GM12878 (cell line): ENCODE measurements at regions of chrX and their contacts with region 1.

Region 1: GRCh38 chrX:24054182-24055042 is at the start of gene EIF2S3:
- DNase-seq: peak; percentile 88
- ATAC-seq: peak; percentile 91
- H3K4me3 ChIP-seq: peak within 1 kb of the TSS; percentile 72
- H3K27ac ChIP-seq: peak within 1 kb of the TSS; percentile 97
- H3K4me1 ChIP-seq: no peaks in the 10 kb centered on the region
- H3K27me3 ChIP-seq: no peaks in the 10 kb centered on the region
- CTCF ChIP-seq: peak; percentile 64 to 80 (median 74)
- EP300 ChIP-seq: peak; percentile 34 to 66; a peak in 3 of 4 replicates
- POLR2A ChIP-seq: peak; percentile 99
- RAD21 ChIP-seq: peak; percentile 41
- polyA plus RNA-seq, gene EIF2S3: 120 to 135 TPM

Region 2: GRCh38 chrX:23782863-23783568 is 271.4 kb before region 1 on chrX and contains the start of gene SAT1:
- CTCF ChIA-PET with region 1: interaction called, 11 read pairs
- POLR2A ChIA-PET with region 1: interaction called, 4 read pairs
- RAD21 ChIA-PET with region 1: interaction called, 22 read pairs
- SMC1A ChIA-PET with region 1: interaction called, 3 read pairs
- in situ Hi-C with region 1: no loop called
- intact Hi-C with region 1: loop called (anchors 10 kb)
- DNase-seq: peak; percentile 65
- ATAC-seq: peak; percentile 88
- H3K4me3 ChIP-seq: peak within 1 kb of the TSS; percentile 75
- H3K27ac ChIP-seq: peak within 1 kb of the TSS; percentile 82
- H3K4me1 ChIP-seq: no peaks in the 10 kb centered on the region
- H3K27me3 ChIP-seq: no peaks in the 10 kb centered on the region
- CTCF ChIP-seq: peak; percentile 64 to 74 (median 65)
- EP300 ChIP-seq: no peak
- POLR2A ChIP-seq: peak; percentile 100
- RAD21 ChIP-seq: peak; percentile 65
- polyA plus RNA-seq, gene SAT1: 155 to 162 TPM

Region 3: GRCh38 chrX:23871905-23872546 is 182.4 kb before region 1 on chrX:
- CTCF ChIA-PET with region 1: no interaction called
- POLR2A ChIA-PET with region 1: no interaction called
- RAD21 ChIA-PET with region 1: no interaction called
- SMC1A ChIA-PET with region 1: no interaction called
- in situ Hi-C with region 1: no loop called
- intact Hi-C with region 1: no loop called
- DNase-seq: no peak
- ATAC-seq: no peak
- H3K4me3 ChIP-seq: no peak overlapping the region
- H3K27ac ChIP-seq: no peak overlapping the region
- H3K4me1 ChIP-seq: no peaks in the 10 kb centered on the region
- H3K27me3 ChIP-seq: no peaks in the 10 kb centered on the region
- CTCF ChIP-seq: no peak
- EP300 ChIP-seq: no peak
- POLR2A ChIP-seq: no peak
- RAD21 ChIP-seq: no peak

Region 4: GRCh38 chrX:23907498-23908218 is 146.8 kb before region 1 on chrX and contains the starts of genes APOO and CXorf58:
- CTCF ChIA-PET with region 1: interaction called, 39 read pairs
- POLR2A ChIA-PET with region 1: interaction called, 31 read pairs
- RAD21 ChIA-PET with region 1: interaction called, 44 read pairs
- SMC1A ChIA-PET with region 1: interaction called, 37 read pairs
- in situ Hi-C with region 1: no loop called
- intact Hi-C with region 1: loop called (anchors 1 kb)
- DNase-seq: peak; percentile 54
- ATAC-seq: peak; percentile 95
- H3K4me3 ChIP-seq: peak within 1 kb of the TSS; percentile 78
- H3K27ac ChIP-seq: peak within 1 kb of the TSS; percentile 73
- H3K4me1 ChIP-seq: no peaks in the 10 kb centered on the region; the same call in 1 of the 2 replicates
- H3K27me3 ChIP-seq: no peaks in the 10 kb centered on the region
- CTCF ChIP-seq: peak; percentile 73 to 83 (median 76)
- EP300 ChIP-seq: no peak; a peak in 1 of 4 replicates
- POLR2A ChIP-seq: peak; percentile 81
- RAD21 ChIP-seq: peak; percentile 51
- polyA plus RNA-seq, gene APOO: 41.8 to 42.9 TPM
- polyA plus RNA-seq, gene CXorf58: not detected

Region 5: DNA sequence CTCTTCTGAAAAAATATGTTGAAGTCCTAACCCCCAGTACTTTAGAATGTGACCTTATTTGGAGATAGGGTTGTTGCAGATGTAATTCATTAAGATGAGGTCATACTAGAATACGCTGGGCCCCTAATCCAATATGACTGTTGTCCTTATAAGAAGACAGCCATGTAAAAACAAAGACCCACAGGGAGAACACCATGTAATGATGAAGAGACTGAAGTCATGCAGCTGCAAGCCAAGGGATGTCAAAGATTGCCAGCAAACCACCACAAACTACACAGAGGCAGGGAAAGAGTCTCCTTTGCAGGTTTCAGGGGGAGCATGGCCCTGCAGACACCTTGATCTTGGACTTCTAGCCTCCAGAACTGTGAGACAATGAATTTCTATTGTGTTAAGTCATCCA is 109.2 kb before region 1 on chrX:
- CTCF ChIA-PET with region 1: no interaction called
- POLR2A ChIA-PET with region 1: no interaction called
- RAD21 ChIA-PET with region 1: no interaction called
- SMC1A ChIA-PET with region 1: no interaction called
- in situ Hi-C with region 1: no loop called
- intact Hi-C with region 1: no loop called
- DNase-seq: no peak
- ATAC-seq: no peak
- H3K4me3 ChIP-seq: no peak overlapping the region
- H3K27ac ChIP-seq: no peak overlapping the region
- H3K4me1 ChIP-seq: no peaks in the 10 kb centered on the region
- H3K27me3 ChIP-seq: peaks cover 0 to 3% of the 10 kb centered on the region in 2 experiments; a peak in 1 of 4 replicates
- CTCF ChIP-seq: no peak
- EP300 ChIP-seq: no peak
- POLR2A ChIP-seq: no peak
- RAD21 ChIP-seq: no peak

Region 6: DNA sequence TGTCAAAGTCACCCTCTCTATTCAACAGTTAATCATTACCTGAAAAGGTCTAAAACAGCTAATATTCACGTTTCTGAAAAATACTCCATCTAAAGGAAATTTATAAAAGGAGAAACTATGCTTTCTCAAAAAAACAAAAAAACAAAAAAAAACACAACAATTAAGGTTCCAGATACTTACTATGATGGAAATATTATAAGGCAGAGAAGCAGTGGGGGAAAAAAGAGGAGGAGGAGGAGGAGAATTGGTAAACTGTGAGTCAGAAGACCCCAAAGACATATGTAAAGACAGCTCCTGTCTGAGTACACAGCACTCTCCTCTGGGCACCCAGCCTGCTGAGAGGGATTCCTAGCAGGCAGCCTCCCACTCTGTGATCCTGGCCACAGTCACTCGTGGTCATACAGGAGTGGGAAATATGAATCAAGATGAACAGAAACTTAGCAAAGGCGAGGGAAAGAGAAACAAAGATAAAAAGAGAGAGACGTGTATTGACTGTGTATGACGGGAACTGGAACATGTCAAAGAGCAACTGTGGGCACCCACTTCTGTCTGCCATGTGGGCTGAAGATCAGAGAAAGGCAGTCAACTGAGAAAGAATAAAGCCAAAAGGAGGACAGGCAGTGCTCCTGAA is 39.9 kb before region 1 on chrX:
- CTCF ChIA-PET with region 1: interaction called, 11 read pairs
- POLR2A ChIA-PET with region 1: interaction called, 3 read pairs
- RAD21 ChIA-PET with region 1: no interaction called
- SMC1A ChIA-PET with region 1: interaction called, 12 read pairs
- in situ Hi-C with region 1: no loop called
- intact Hi-C with region 1: no loop called
- DNase-seq: peak; percentile 45
- ATAC-seq: peak; percentile 86
- H3K4me3 ChIP-seq: no peak overlapping the region
- H3K27ac ChIP-seq: peak overlapping the region; percentile 35
- H3K4me1 ChIP-seq: no peaks in the 10 kb centered on the region
- H3K27me3 ChIP-seq: no peaks in the 10 kb centered on the region
- CTCF ChIP-seq: no peak
- EP300 ChIP-seq: no peak
- POLR2A ChIP-seq: no peak
- RAD21 ChIP-seq: no peak

Region 7: GRCh38 chrX:24024819-24025740 is 29.3 kb before region 1 on chrX:
- CTCF ChIA-PET with region 1: interaction called, 20 read pairs
- POLR2A ChIA-PET with region 1: interaction called, 23 read pairs
- RAD21 ChIA-PET with region 1: interaction called, 31 read pairs
- SMC1A ChIA-PET with region 1: interaction called, 20 read pairs
- in situ Hi-C with region 1: no loop called
- intact Hi-C with region 1: loop called (anchors 1 kb)
- DNase-seq: peak; percentile 43
- ATAC-seq: peak; percentile 88
- H3K4me3 ChIP-seq: peak overlapping the region; percentile 77
- H3K27ac ChIP-seq: peak overlapping the region; percentile 78
- H3K4me1 ChIP-seq: no peaks in the 10 kb centered on the region
- H3K27me3 ChIP-seq: no peaks in the 10 kb centered on the region; a peak in 1 of 4 replicates
- CTCF ChIP-seq: peak in 2 of 3 experiments; percentile 5 to 27; a peak in 1 of 6 replicates
- EP300 ChIP-seq: no peak; a peak in 1 of 4 replicates
- POLR2A ChIP-seq: peak; percentile 95
- RAD21 ChIP-seq: no peak

Region 8: GRCh38 chrX:24150051-24150790 is 95.8 kb after region 1 on chrX:
- CTCF ChIA-PET with region 1: interaction called, 3 read pairs
- POLR2A ChIA-PET with region 1: interaction called, 5 read pairs
- RAD21 ChIA-PET with region 1: interaction called, 3 read pairs
- SMC1A ChIA-PET with region 1: no interaction called
- in situ Hi-C with region 1: no loop called
- intact Hi-C with region 1: loop called (anchors 1 kb)
- DNase-seq: peak; percentile 55
- ATAC-seq: peak; percentile 83
- H3K4me3 ChIP-seq: peak overlapping the region; percentile 88
- H3K27ac ChIP-seq: peak overlapping the region; percentile 80
- H3K4me1 ChIP-seq: peaks cover 22% of the 10 kb centered on the region
- H3K27me3 ChIP-seq: no peaks in the 10 kb centered on the region
- CTCF ChIP-seq: peak; percentile 22 to 49 (median 37); a peak in 5 of 6 replicates
- EP300 ChIP-seq: 0 out of 4 replicates have a peak, but pooled peaks of 1 of the 2 experiments have one; percentile 10
- POLR2A ChIP-seq: peak; percentile 88
- RAD21 ChIP-seq: peak; percentile 2; the same call in 1 of the 2 replicates

Region 9: DNA sequence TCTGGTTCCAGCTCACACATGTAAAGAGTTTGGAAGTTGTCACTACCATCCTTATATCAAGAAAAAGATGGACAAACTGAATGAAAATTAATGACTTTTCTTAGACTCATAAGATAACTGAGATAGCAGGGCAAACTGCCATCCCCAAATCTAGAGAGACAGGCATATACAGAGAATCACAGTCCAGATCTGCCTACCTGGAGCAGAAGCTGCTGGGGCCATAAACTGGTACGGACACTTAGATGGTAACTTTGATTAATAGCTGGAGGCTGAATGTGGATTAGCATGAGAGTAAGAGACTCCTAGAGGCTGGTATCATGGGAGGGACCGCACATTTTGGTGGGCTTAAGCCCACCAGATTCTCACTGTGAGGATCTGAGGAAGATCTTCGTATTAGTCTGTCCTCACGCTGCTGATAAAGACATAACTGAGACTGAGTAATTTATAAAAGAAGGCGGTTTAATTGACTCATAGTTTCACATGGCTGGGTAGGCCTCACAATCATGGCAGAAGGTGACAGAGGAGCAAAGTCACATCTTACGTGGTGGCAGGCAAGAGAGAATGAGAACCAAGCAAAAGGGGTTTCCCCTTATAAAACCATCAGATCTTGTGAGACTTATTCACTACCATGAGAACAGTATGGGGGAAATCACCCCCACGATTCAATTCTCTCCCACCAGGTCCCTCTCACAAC is 628.5 kb after region 1 on chrX:
- CTCF ChIA-PET with region 1: no interaction called
- POLR2A ChIA-PET with region 1: no interaction called
- RAD21 ChIA-PET with region 1: no interaction called
- SMC1A ChIA-PET with region 1: no interaction called
- in situ Hi-C with region 1: no loop called
- intact Hi-C with region 1: no loop called
- DNase-seq: no peak
- ATAC-seq: peak; percentile 28; the same call in 2 of the 3 replicates
- H3K4me3 ChIP-seq: no peak overlapping the region
- H3K27ac ChIP-seq: no peak overlapping the region
- H3K4me1 ChIP-seq: no peaks in the 10 kb centered on the region
- H3K27me3 ChIP-seq: no peaks in the 10 kb centered on the region; a peak in 1 of 4 replicates
- CTCF ChIP-seq: no peak
- EP300 ChIP-seq: no peak
- POLR2A ChIP-seq: no peak
- RAD21 ChIP-seq: no peak